H1 (cell line): ENCODE measurements at regions of chr4 and their contacts with region 1.

Region 1: GRCh38 chr4:186021461-186022167 is 47.3 kb upstream of the TLR3 start:
- DNase-seq: peak in 1 of 2 experiments; percentile 77
- H3K4me3 ChIP-seq: no peak overlapping the region
- H3K27ac ChIP-seq: no peak overlapping the region
- H3K4me1 ChIP-seq: peaks cover 0 to 9% (median 3%) of the 10 kb centered on the region in 4 experiments; a peak in 4 of 7 replicates
- H3K27me3 ChIP-seq: peaks cover 0 to 2% (median 0%) of the 10 kb centered on the region in 4 experiments; a peak in 1 of 7 replicates
- CTCF ChIP-seq: peak; percentile 56 to 92 (median 89)
- EP300 ChIP-seq: no peak
- POLR2A ChIP-seq: no peak
- RAD21 ChIP-seq: peak; percentile 99 to 100

Region 2: GRCh38 chr4:185640811-185641675 is 380.6 kb before region 1 on chr4:
- CTCF ChIA-PET with region 1: interaction called, 45 read pairs
- POLR2A ChIA-PET with region 1: interaction called, 3 read pairs
- DNase-seq: no peak
- H3K4me3 ChIP-seq: no peak overlapping the region
- H3K27ac ChIP-seq: no peak overlapping the region
- H3K4me1 ChIP-seq: peaks cover 0 to 16% (median 6%) of the 10 kb centered on the region in 4 experiments; a peak in 4 of 7 replicates
- H3K27me3 ChIP-seq: no peaks in the 10 kb centered on the region
- CTCF ChIP-seq: peak in 2 of 3 experiments; percentile 12 to 23; a peak in 2 of 4 replicates
- EP300 ChIP-seq: no peak
- POLR2A ChIP-seq: no peak
- RAD21 ChIP-seq: peak in 1 of 2 experiments; percentile 41

Region 3: GRCh38 chr4:185965426-185966384 is 55.9 kb before region 1 on chr4:
- CTCF ChIA-PET with region 1: no interaction called
- POLR2A ChIA-PET with region 1: no interaction called
- DNase-seq: no peak
- H3K4me3 ChIP-seq: no peak overlapping the region
- H3K27ac ChIP-seq: no peak overlapping the region
- H3K4me1 ChIP-seq: no peaks in the 10 kb centered on the region
- H3K27me3 ChIP-seq: no peaks in the 10 kb centered on the region
- CTCF ChIP-seq: no peak
- EP300 ChIP-seq: no peak
- POLR2A ChIP-seq: no peak
- RAD21 ChIP-seq: no peak

Region 4: GRCh38 chr4:186485561-186486062 is 464.0 kb after region 1 on chr4:
- CTCF ChIA-PET with region 1: no interaction called
- POLR2A ChIA-PET with region 1: no interaction called
- DNase-seq: peak in 1 of 2 experiments; percentile 53
- H3K4me3 ChIP-seq: peak overlapping the region in 2 of 4 experiments; percentile 26 to 36; a peak in 4 of 8 replicates
- H3K27ac ChIP-seq: no peak overlapping the region
- H3K4me1 ChIP-seq: peaks cover 0 to 11% (median 4%) of the 10 kb centered on the region in 4 experiments; a peak in 1 of 7 replicates
- H3K27me3 ChIP-seq: no peaks in the 10 kb centered on the region
- CTCF ChIP-seq: no peak
- EP300 ChIP-seq: no peak
- POLR2A ChIP-seq: no peak
- RAD21 ChIP-seq: no peak